Activated CD4-positive, alpha-beta memory T cell treated with anti-CD3 and anti-CD28 coated beads for 36 hours (primary cell): ENCODE measurements at regions of chr14 and their contacts with region 1.

Region 1: GRCh38 chr14:20613094-20614037 is 22.2 kb upstream of the RNASE12 start:
- DNase-seq: peak; percentile 90
- H3K4me3 Mint-ChIP-seq: no peak overlapping the region
- H3K27ac Mint-ChIP-seq: no peak overlapping the region
- H3K4me1 Mint-ChIP-seq: peaks cover 11% of the 10 kb centered on the region
- H3K27me3 Mint-ChIP-seq: no peaks in the 10 kb centered on the region

Region 2: DNA sequence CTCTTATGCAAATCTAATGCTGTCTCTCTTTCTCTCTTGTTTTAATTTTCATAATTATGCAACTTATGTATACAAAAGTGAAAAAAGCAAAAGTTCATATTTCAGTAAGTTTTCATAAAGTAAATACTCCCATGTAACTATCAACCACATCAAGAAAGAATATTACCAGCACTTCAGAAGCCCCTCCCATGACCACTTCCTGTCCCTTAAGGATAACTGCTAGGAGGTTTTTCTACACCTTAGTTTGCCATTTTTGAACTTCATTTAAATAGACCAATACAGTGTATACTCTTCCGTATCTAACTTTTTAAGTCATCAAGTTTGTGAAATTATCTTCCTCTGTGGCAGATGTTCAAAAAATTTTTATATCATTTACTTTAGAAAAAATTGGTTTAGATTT is 638.5 kb before region 1 on chr14:
- CTCF ChIA-PET with region 1: no interaction called
- POLR2A ChIA-PET with region 1: no interaction called
- intact Hi-C with region 1: no loop called
- DNase-seq: no peak
- H3K4me3 Mint-ChIP-seq: no peak overlapping the region
- H3K27ac Mint-ChIP-seq: no peak overlapping the region
- H3K4me1 Mint-ChIP-seq: peaks cover 32% of the 10 kb centered on the region
- H3K27me3 Mint-ChIP-seq: no peaks in the 10 kb centered on the region

Region 3: GRCh38 chr14:20327005-20327869 is 286.1 kb before region 1 on chr14:
- CTCF ChIA-PET with region 1: interaction called, 64 read pairs
- POLR2A ChIA-PET with region 1: no interaction called
- intact Hi-C with region 1: loop called (anchors 1 kb)
- DNase-seq: no peak
- H3K4me3 Mint-ChIP-seq: peak overlapping the region; percentile 0
- H3K27ac Mint-ChIP-seq: peak overlapping the region; percentile 43
- H3K4me1 Mint-ChIP-seq: peaks cover 40% of the 10 kb centered on the region
- H3K27me3 Mint-ChIP-seq: no peaks in the 10 kb centered on the region

Region 4: DNA sequence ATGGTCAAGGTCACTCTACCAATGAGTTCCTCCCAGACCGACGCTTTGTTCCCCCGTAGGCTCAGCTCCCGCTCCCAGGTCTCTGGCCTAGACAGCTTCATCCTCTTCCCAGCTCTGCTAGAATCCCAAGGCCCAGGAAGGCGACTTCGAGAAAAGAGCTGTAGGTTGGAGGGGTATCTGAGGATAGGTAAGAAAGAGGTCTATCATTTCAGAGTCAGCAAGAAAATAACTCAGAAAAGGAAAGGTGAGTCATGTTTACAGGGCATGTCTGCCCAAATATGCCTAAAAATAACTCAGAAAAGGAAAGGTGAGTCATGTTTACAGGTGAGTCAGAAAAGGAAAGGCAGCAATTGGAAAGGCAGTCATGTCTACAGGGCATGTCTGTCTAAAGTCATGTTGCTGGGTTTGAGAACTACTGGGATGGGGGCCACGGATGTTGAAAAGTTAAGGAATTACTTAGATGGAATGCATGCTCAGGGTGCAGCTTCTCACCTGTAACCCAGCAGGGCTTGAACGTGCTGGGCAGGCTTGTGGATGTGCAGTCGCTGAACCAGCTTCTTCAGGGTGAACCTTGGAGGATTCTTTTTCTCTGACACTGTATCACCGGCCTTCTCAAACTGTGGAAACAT is 212.3 kb before region 1 on chr14:
- CTCF ChIA-PET with region 1: interaction called, 5 read pairs
- POLR2A ChIA-PET with region 1: no interaction called
- intact Hi-C with region 1: loop called (anchors 1 kb)
- DNase-seq: peak; percentile 43
- H3K4me3 Mint-ChIP-seq: peak overlapping the region; percentile 52
- H3K27ac Mint-ChIP-seq: peak overlapping the region; percentile 95
- H3K4me1 Mint-ChIP-seq: peaks cover 30% of the 10 kb centered on the region
- H3K27me3 Mint-ChIP-seq: no peaks in the 10 kb centered on the region

Region 5: GRCh38 chr14:20440882-20441281 is 172.5 kb before region 1 on chr14:
- CTCF ChIA-PET with region 1: no interaction called
- POLR2A ChIA-PET with region 1: no interaction called
- intact Hi-C with region 1: no loop called
- DNase-seq: peak; percentile 53
- H3K4me3 Mint-ChIP-seq: no peak overlapping the region
- H3K27ac Mint-ChIP-seq: no peak overlapping the region
- H3K4me1 Mint-ChIP-seq: peaks cover 12% of the 10 kb centered on the region
- H3K27me3 Mint-ChIP-seq: no peaks in the 10 kb centered on the region

Region 6: GRCh38 chr14:20461274-20462001 is 151.9 kb before region 1 on chr14 and contains the start of gene PIP4P1:
- CTCF ChIA-PET with region 1: interaction called, 3 read pairs
- POLR2A ChIA-PET with region 1: interaction called, 3 read pairs
- intact Hi-C with region 1: loop called (anchors 1 kb)
- DNase-seq: peak; percentile 99
- H3K4me3 Mint-ChIP-seq: peak within 1 kb of the TSS; percentile 91
- H3K27ac Mint-ChIP-seq: peak within 1 kb of the TSS; percentile 93
- H3K4me1 Mint-ChIP-seq: peaks cover 33% of the 10 kb centered on the region
- H3K27me3 Mint-ChIP-seq: no peaks in the 10 kb centered on the region
- total RNA-seq, gene PIP4P1: 31.1 to 35.2 TPM

Region 7: DNA sequence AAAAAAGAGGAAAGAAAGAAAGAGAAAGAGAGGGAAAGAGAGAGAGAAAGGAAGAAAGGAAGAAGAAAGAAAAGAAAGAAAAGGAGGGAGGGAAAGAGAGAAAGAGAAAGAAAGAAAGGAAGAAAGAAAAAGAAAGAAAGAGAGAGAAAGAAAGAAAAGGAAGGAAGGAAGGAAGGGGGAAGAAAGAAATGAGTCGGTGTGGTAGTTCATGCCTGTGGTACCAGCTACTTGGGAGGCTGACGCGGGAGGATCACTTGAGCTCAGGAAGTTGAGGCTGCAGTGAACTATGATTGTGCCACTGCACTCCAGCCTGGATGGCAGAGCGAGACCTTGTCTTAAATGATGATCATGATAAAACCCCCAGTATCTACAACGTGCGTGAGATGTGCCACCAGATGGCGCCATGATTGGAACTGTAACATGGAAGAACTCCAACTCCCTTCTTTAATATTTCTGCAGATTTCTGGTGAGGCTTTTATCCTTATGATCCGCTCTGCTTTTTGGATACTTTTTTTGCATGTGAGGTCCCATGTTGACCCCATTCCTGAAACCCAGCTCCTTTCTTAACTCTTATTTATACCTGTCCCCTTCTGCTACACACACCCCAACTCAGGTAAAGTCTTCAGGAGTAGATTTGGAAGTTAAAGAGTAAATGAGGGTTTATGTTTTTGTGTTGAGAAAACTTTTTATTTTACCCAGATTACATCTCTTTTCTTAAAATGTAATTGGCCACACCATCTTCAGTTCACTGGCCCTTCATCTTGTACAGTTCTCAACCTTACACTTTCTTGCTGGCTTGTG is 82.4 kb before region 1 on chr14:
- CTCF ChIA-PET with region 1: interaction called, 15 read pairs
- POLR2A ChIA-PET with region 1: no interaction called
- intact Hi-C with region 1: loop called (anchors 1 kb)
- DNase-seq: peak; percentile 82
- H3K4me3 Mint-ChIP-seq: peak overlapping the region; percentile 47
- H3K27ac Mint-ChIP-seq: no peak overlapping the region
- H3K4me1 Mint-ChIP-seq: peaks cover 8% of the 10 kb centered on the region
- H3K27me3 Mint-ChIP-seq: peaks cover 2% of the 10 kb centered on the region

Region 8: GRCh38 chr14:20662968-20663732 is 49.8 kb after region 1 on chr14:
- CTCF ChIA-PET with region 1: interaction called, 5 read pairs
- POLR2A ChIA-PET with region 1: no interaction called
- intact Hi-C with region 1: loop called (anchors 1 kb)
- DNase-seq: peak; percentile 93
- H3K4me3 Mint-ChIP-seq: peak overlapping the region; percentile 74
- H3K27ac Mint-ChIP-seq: peak overlapping the region; percentile 62
- H3K4me1 Mint-ChIP-seq: peaks cover 25% of the 10 kb centered on the region
- H3K27me3 Mint-ChIP-seq: peaks cover under 1% of the 10 kb centered on the region

Region 9: GRCh38 chr14:20782280-20782890 is 169.0 kb after region 1 on chr14:
- CTCF ChIA-PET with region 1: no interaction called
- POLR2A ChIA-PET with region 1: no interaction called
- intact Hi-C with region 1: loop called (anchors 5 kb)
- DNase-seq: peak; percentile 32
- H3K4me3 Mint-ChIP-seq: peak overlapping the region; percentile 64
- H3K27ac Mint-ChIP-seq: peak overlapping the region; percentile 79
- H3K4me1 Mint-ChIP-seq: peaks cover 29% of the 10 kb centered on the region
- H3K27me3 Mint-ChIP-seq: no peaks in the 10 kb centered on the region

Region 10: DNA sequence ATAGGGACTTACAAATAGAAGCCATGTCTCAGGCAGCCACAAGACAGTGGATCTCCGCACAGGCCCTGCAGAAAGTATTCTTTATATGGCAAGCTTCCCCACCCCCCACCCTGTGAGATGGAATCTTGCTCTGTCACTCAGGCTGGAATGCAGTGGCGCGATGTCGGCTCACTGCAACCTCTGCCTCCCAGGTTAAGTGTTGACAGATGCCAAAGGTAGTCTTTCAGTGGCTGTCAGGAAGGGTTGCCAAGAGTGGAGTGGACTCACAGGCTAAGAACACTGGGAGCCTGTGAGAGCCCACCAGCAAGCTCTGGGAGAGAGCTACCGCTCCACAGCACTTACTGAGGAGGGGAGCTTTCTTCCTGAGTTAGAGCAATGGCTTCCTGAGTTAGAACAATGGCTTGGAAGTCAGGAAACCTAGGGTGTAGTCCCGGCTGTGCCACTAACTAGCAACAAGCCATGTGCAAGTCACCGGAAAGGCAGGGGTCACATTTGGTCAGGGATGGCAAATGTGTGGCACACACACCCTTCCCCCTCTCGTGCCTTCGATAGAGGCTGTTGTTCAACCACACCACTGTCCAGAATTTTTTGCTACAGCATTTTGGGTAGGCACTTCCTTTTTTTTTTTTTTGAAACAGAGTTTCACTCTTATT is 186.7 kb after region 1 on chr14:
- CTCF ChIA-PET with region 1: no interaction called
- POLR2A ChIA-PET with region 1: no interaction called
- intact Hi-C with region 1: no loop called
- DNase-seq: no peak
- H3K4me3 Mint-ChIP-seq: no peak overlapping the region
- H3K27ac Mint-ChIP-seq: no peak overlapping the region
- H3K4me1 Mint-ChIP-seq: no peaks in the 10 kb centered on the region
- H3K27me3 Mint-ChIP-seq: peaks cover 3% of the 10 kb centered on the region

Region 11: GRCh38 chr14:20848316-20848954 is 235.1 kb after region 1 on chr14:
- CTCF ChIA-PET with region 1: no interaction called
- POLR2A ChIA-PET with region 1: no interaction called
- intact Hi-C with region 1: no loop called
- DNase-seq: no peak
- H3K4me3 Mint-ChIP-seq: no peak overlapping the region
- H3K27ac Mint-ChIP-seq: no peak overlapping the region
- H3K4me1 Mint-ChIP-seq: no peaks in the 10 kb centered on the region
- H3K27me3 Mint-ChIP-seq: peaks cover 4% of the 10 kb centered on the region